Activated T-helper 1 cell treated with anti-CD3 and anti-CD28 coated beads, Interleukin-12 subunit alpha, Interleukin-12 subunit beta, Interleukin-2, Interleukin-4 antibody, amounts not matched to agents 30 ng/mL and 10 ng/mL and 1 ng/mL, durations not matched to agents 14 hours and 24 hours and 36 hours (primary cell): ENCODE measurements at regions of chr6 and their contacts with region 1.

Region 1: GRCh38 chr6:251920-252319 is 40.4 kb upstream of the DUSP22 start:
- DNase-seq: no peak
- H3K4me3 Mint-ChIP-seq: peak overlapping the region; percentile 48
- H3K27ac Mint-ChIP-seq: peak overlapping the region; percentile 90
- H3K4me1 Mint-ChIP-seq: peaks cover 38% of the 10 kb centered on the region
- H3K27me3 Mint-ChIP-seq: peaks cover 3% of the 10 kb centered on the region

Region 2: DNA sequence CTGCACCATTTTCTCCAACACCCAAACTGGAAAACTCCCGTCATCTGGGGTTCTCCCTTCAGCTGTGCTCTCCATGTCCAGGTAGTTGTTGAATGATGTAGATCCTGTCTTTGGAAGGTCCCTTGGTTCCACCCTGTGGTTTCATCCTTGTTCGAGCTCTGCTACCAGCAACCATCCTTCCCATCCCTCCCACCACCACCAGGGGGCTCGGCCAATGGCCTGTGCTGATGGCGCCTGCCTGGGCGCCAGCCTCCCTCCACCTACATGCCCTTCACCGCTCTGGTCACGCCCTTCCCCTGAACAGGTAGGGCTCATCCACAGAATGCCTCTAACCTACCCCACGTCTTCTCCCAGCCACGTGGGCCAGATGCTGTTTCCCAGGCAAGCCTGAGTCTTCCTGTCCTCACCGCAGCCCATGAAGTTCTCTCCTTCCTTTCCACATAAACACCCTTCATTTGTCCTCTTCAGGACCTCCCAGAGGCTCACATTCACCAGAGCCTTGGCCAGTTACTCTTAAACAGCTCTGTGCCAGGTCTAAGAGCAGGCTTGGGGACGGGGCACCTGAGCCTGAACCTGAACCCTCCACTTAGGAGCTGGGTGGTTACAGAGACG is 34.8 kb before region 1 on chr6:
- intact Hi-C with region 1: loop called (anchors 5 kb)
- DNase-seq: no peak
- H3K4me3 Mint-ChIP-seq: no peak overlapping the region
- H3K27ac Mint-ChIP-seq: no peak overlapping the region
- H3K4me1 Mint-ChIP-seq: peaks cover 53% of the 10 kb centered on the region
- H3K27me3 Mint-ChIP-seq: peaks cover 5% of the 10 kb centered on the region

Region 3: DNA sequence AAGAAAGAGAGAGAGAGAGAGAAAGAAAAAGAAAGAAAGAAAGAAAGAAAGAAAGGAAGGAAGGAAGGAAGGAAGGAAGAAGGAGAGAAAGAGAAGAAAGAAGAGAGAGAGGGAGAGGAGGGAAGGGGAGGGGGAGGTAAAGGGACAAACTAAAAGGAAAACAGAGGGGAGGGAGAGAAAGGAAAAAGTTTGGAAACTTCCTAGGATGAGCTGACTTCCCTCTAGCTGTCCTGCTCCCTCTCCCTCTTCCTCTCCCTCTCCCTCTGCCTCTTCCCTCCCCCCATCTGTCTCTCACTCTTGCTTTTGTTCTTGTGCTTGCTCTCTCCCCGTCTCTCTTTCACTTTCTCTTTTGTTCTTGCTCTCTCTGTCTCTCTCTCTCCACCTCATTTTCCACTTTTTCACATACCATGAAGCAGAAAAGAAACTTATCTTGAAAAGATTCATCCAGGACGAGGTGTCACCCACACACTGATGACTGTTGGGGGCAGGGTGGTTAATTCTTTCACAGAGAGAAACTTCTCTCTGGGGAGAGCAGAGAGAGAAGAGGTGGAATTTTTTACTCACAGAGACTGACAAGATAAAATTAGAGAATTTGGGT is 16.1 kb before region 1 on chr6:
- intact Hi-C with region 1: loop called (anchors 1 kb)
- DNase-seq: peak; percentile 41
- H3K4me3 Mint-ChIP-seq: peak overlapping the region; percentile 56
- H3K27ac Mint-ChIP-seq: peak overlapping the region; percentile 88
- H3K4me1 Mint-ChIP-seq: peaks cover 57% of the 10 kb centered on the region
- H3K27me3 Mint-ChIP-seq: no peaks in the 10 kb centered on the region

Region 4: GRCh38 chr6:514396-514973 is 262.6 kb after region 1 on chr6:
- intact Hi-C with region 1: no loop called
- DNase-seq: no peak
- H3K4me3 Mint-ChIP-seq: peak overlapping the region; percentile 51
- H3K27ac Mint-ChIP-seq: peak overlapping the region; percentile 90
- H3K4me1 Mint-ChIP-seq: peaks cover 67% of the 10 kb centered on the region
- H3K27me3 Mint-ChIP-seq: no peaks in the 10 kb centered on the region